Activated naive CD4-positive, alpha-beta T cell treated with anti-CD3 and anti-CD28 coated beads, Interleukin-2, amount 10 ng/mL, durations not matched to agents 7 days and 5 days (primary cell): ENCODE measurements at regions of chr13 and their contacts with region 1.

Region 1: DNA sequence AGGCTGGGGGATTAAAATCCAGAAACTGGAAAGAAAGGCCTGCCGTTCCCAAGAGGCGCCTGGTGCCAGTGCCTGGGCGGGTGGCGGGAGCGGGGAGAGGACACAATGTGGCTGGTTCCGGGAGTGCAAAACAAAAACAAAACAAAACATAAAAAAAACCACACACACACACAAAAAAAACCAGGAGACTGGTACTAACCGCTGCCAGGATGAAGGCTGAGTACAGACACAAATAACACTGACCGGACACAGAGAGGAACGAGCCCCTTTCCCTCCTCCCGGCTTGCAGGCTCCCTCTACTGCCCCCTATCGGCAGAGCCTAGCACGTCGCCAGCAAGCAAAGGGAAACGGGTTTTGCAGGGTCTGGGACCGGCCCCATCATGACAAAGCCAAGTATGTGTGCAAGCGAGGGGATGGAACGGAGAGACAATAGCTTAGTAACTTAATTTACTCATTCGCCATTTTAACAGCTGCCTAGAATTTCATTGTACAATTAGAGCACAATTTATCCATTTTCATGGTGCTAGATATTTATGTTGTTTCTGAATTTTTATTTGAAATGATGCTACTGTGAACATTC is 17.9 kb upstream of the ZDHHC20 start:
- DNase-seq: peak; percentile 86
- H3K4me3 Mint-ChIP-seq: peak overlapping the region; percentile 65
- H3K27ac Mint-ChIP-seq: no peak overlapping the region
- H3K4me1 Mint-ChIP-seq: peaks cover 15% of the 10 kb centered on the region
- H3K27me3 Mint-ChIP-seq: peaks cover 9% of the 10 kb centered on the region

Region 2: DNA sequence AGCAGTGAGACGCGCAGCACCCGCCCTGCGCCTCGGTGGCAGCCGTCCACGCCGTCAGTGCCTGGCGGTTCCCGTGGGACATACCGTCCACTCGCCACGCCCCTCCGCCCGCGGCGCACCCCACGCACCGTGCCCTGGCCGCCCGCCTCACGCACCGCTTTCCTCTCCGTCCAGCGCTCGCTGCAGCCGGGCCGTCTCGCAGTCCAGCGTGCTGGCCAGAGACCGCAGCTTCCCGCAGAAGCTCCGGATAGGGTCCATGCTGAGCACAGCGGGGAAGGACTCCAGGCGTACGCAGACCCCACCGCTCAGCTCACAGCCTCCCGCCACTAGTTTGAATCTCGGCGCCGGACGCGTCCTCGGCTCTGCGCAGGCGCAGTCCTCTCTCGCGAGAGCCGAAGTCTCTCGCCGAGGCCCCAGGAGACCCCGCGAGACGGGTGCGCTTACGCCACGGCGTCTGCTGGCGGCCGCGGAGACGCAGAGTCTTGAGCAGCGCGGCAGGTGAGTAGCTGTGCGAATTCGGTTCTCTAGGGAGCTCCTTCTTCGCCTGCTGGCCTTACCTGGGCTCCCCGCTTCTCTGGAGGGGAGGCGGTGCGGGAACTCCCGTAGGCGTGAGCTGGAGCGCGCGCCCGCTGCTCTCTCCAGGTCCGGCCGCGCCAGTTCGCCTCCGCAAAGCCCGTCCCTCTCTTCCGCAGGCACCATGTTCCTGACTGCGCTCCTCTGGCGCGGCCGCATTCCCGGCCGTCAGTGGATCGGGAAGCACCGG is 300.6 kb before region 1 on chr13 and contains the starts of genes MRPL57 and SKA3:
- CTCF ChIA-PET with region 1: interaction called, 10 read pairs
- DNase-seq: peak; percentile 95
- H3K4me3 Mint-ChIP-seq: peak within 1 kb of the TSS; percentile 97
- H3K27ac Mint-ChIP-seq: peak within 1 kb of the TSS; percentile 96
- H3K4me1 Mint-ChIP-seq: peaks cover 38% of the 10 kb centered on the region
- H3K27me3 Mint-ChIP-seq: peaks cover 6% of the 10 kb centered on the region

Region 3: GRCh38 chr13:21297914-21298831 is 178.8 kb before region 1 on chr13:
- CTCF ChIA-PET with region 1: interaction called, 169 read pairs
- DNase-seq: peak; percentile 89
- H3K4me3 Mint-ChIP-seq: peak overlapping the region; percentile 90
- H3K27ac Mint-ChIP-seq: peak overlapping the region; percentile 70
- H3K4me1 Mint-ChIP-seq: peaks cover 22% of the 10 kb centered on the region
- H3K27me3 Mint-ChIP-seq: no peaks in the 10 kb centered on the region

Region 4: GRCh38 chr13:21344662-21345176 is 132.3 kb before region 1 on chr13:
- CTCF ChIA-PET with region 1: interaction called, 14 read pairs
- DNase-seq: peak; percentile 68
- H3K4me3 Mint-ChIP-seq: peak overlapping the region; percentile 58
- H3K27ac Mint-ChIP-seq: peak overlapping the region; percentile 88
- H3K4me1 Mint-ChIP-seq: peaks cover 34% of the 10 kb centered on the region
- H3K27me3 Mint-ChIP-seq: no peaks in the 10 kb centered on the region

Region 5: DNA sequence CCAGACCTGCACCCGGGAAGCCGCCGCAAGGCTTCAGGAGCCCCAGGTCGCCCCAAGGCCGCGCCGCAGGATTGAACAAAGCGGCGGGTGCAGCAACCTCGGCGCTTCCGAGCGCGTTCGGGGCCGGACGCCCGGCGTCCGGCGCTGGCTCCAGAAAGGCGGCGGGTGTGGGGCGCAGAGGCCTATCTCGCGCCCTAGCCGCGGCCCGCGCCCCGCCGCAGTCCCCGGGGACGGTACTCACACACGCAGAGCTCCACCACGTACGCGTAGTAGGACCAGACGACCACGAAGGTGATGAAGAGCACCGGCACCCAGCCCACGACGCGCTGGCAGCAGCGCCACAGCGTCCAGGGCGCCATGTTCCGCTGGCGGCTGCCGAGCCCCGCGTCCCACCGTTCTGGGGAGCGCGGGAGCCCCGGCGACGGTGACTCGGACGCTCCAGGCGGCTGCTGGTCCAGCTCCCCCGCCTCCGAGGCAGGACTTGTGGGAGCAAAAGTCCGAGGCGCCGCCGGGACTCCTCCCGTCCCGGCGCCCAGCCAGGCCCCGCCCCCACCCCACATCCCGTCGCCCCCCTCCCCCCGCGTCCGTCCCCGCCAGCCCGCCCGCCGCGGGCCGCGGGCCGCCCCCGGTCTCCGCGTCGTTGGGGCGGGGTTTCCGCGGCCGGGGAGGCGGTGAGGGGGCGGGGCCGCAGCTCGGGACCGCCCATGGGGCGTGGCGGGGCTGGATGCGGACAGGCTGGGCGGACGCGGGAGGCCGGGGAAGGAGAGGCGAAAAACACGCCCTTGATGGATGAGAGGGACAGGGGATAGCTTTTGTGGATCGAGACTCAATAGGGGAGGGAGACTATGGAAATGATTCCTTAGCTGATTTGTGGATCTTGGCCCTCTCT is 17.9 kb before region 1 on chr13 and contains the start of gene ZDHHC20:
- CTCF ChIA-PET with region 1: interaction called, 20 read pairs
- DNase-seq: peak; percentile 90
- H3K4me3 Mint-ChIP-seq: peak within 1 kb of the TSS; percentile 94
- H3K27ac Mint-ChIP-seq: peak within 1 kb of the TSS; percentile 93
- H3K4me1 Mint-ChIP-seq: peaks cover 45% of the 10 kb centered on the region
- H3K27me3 Mint-ChIP-seq: peaks cover 4% of the 10 kb centered on the region

Region 6: GRCh38 chr13:21465710-21466160 is 11.2 kb before region 1 on chr13:
- CTCF ChIA-PET with region 1: interaction called, 21 read pairs
- DNase-seq: no peak
- H3K4me3 Mint-ChIP-seq: no peak overlapping the region
- H3K27ac Mint-ChIP-seq: no peak overlapping the region
- H3K4me1 Mint-ChIP-seq: no peaks in the 10 kb centered on the region
- H3K27me3 Mint-ChIP-seq: peaks cover 16% of the 10 kb centered on the region

Region 7: GRCh38 chr13:21686751-21687391 is 209.9 kb after region 1 on chr13:
- CTCF ChIA-PET with region 1: no interaction called
- DNase-seq: no peak
- H3K4me3 Mint-ChIP-seq: no peak overlapping the region
- H3K27ac Mint-ChIP-seq: no peak overlapping the region
- H3K4me1 Mint-ChIP-seq: no peaks in the 10 kb centered on the region
- H3K27me3 Mint-ChIP-seq: peaks cover 9% of the 10 kb centered on the region

Region 8: DNA sequence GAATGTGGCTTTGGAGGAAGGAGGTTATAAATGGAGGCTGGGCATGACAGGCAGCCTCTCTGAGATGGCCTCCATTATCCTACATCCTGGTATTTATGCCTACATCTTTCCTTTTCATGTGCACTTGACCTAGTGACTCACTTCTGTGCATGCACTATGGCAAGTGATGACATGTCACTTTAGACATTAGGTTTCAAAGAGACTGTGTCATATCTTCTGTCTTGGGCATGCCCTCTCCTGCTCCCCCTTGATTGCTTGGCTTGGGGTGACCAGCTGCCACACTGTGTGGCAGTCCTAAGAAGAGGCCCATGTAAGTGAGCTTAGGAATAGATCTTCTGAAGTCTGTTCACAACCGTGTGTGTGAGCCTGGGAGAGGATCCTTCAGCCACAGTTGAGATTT is 666.7 kb after region 1 on chr13:
- CTCF ChIA-PET with region 1: no interaction called
- DNase-seq: no peak
- H3K4me3 Mint-ChIP-seq: no peak overlapping the region
- H3K27ac Mint-ChIP-seq: no peak overlapping the region
- H3K4me1 Mint-ChIP-seq: no peaks in the 10 kb centered on the region
- H3K27me3 Mint-ChIP-seq: no peaks in the 10 kb centered on the region